ENCODE measurements at regions of chr4 and their contacts with region 1.

Region 1: DNA sequence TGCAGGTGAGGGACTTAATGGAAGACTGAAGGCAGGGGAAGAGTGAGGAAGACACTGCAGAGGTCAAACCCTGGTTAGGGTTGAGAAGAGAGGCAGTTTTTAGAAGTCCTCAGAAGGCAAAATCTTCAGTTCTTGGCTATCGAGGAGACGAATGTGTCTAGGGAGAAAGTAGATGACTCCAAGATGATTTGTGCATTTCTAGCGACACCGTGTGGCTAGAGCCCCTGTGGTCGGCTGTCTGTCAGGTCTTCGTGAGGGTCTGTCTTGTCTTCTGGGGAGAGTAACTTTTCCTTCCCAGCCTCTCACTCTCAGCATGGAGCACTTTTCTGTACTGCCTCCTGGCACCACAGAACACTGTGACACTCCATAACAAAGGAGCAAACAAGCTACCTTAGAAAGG is 458.1 kb downstream of the STIM2 start:
- DNase-seq: peak in 4 of 5 donors; percentile 33 to 57 (median 44)
- H3K4me3 ChIP-seq: no peak overlapping the region
- H3K27ac ChIP-seq: no peak overlapping the region
- H3K4me1 ChIP-seq: peaks cover 0 to 3% (median 0%) of the 10 kb centered on the region in 3 donors
- H3K27me3 ChIP-seq: no peaks in the 10 kb centered on the region
- CTCF ChIP-seq: peak; percentile 33

Region 2: GRCh38 chr4:27010334-27010940 is 308.3 kb before region 1 on chr4:
- intact Hi-C with region 1: no loop called
- DNase-seq: peak; percentile 47 to 68 (median 62)
- H3K4me3 ChIP-seq: no peak overlapping the region
- H3K27ac ChIP-seq: no peak overlapping the region
- H3K4me1 ChIP-seq: no peaks in the 10 kb centered on the region
- H3K27me3 ChIP-seq: no peaks in the 10 kb centered on the region
- CTCF ChIP-seq: peak; percentile 89

Region 3: GRCh38 chr4:27048429-27049238 is 270.1 kb before region 1 on chr4:
- intact Hi-C with region 1: loop called (anchors 10 kb)
- DNase-seq: peak in 2 of 5 donors; percentile 32 to 46
- H3K4me3 ChIP-seq: peak overlapping the region; percentile 58 to 65 (median 61)
- H3K27ac ChIP-seq: no peak overlapping the region
- H3K4me1 ChIP-seq: peaks cover 0 to 5% (median 3%) of the 10 kb centered on the region in 3 donors
- H3K27me3 ChIP-seq: no peaks in the 10 kb centered on the region
- CTCF ChIP-seq: peak; percentile 62